Activated CD4-positive, alpha-beta T cell treated with anti-CD3 and anti-CD28 coated beads, Interleukin-2, amount 10 ng/mL, durations not matched to agents 24 days and 14 days (primary cell): ENCODE measurements at regions of chr1 and their contacts with region 1.

Region 1: GRCh38 chr1:53326088-53326597 is 1.7 kb downstream of the LRP8 start:
- DNase-seq: peak; percentile 98
- H3K4me3 Mint-ChIP-seq: peak overlapping the region; percentile 99
- H3K27ac Mint-ChIP-seq: peak overlapping the region; percentile 97
- H3K4me1 Mint-ChIP-seq: peaks cover 40% of the 10 kb centered on the region
- H3K27me3 Mint-ChIP-seq: no peaks in the 10 kb centered on the region

Region 2: GRCh38 chr1:52404116-52404986 is 921.8 kb before region 1 on chr1 and contains the starts of genes ORC1 and PRPF38A:
- intact Hi-C with region 1: loop called (anchors 5 kb)
- DNase-seq: peak; percentile 99
- H3K4me3 Mint-ChIP-seq: peak within 1 kb of the TSS; percentile 99
- H3K27ac Mint-ChIP-seq: peak within 1 kb of the TSS; percentile 100
- H3K4me1 Mint-ChIP-seq: peaks cover 47% of the 10 kb centered on the region
- H3K27me3 Mint-ChIP-seq: no peaks in the 10 kb centered on the region
- total RNA-seq, gene ORC1: 43.5 and 44.2 TPM in 2 replicates
- total RNA-seq, gene PRPF38A: 106 and 108 TPM in 2 replicates

Region 3: DNA sequence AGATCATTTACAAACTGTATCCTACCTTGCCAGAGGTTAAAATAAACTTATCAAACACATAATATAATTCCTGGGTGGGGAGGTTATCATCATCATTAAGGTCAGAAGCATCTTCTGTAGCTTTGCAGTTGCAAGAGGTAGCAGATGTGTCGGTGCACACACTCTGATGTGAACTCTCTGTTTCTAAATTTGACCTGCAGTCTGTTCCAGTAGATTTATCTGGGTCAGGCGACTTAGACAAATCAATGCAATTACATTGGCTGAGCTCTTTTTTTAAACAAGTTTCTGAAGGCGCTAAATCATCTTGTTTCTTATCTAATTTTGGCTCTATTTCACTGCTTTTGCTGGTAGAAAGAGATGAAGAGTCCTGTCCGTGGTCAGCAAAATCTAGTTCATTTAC is 851.3 kb before region 1 on chr1:
- intact Hi-C with region 1: no loop called
- DNase-seq: no peak
- H3K4me3 Mint-ChIP-seq: no peak overlapping the region
- H3K27ac Mint-ChIP-seq: no peak overlapping the region
- H3K4me1 Mint-ChIP-seq: no peaks in the 10 kb centered on the region
- H3K27me3 Mint-ChIP-seq: no peaks in the 10 kb centered on the region

Region 4: DNA sequence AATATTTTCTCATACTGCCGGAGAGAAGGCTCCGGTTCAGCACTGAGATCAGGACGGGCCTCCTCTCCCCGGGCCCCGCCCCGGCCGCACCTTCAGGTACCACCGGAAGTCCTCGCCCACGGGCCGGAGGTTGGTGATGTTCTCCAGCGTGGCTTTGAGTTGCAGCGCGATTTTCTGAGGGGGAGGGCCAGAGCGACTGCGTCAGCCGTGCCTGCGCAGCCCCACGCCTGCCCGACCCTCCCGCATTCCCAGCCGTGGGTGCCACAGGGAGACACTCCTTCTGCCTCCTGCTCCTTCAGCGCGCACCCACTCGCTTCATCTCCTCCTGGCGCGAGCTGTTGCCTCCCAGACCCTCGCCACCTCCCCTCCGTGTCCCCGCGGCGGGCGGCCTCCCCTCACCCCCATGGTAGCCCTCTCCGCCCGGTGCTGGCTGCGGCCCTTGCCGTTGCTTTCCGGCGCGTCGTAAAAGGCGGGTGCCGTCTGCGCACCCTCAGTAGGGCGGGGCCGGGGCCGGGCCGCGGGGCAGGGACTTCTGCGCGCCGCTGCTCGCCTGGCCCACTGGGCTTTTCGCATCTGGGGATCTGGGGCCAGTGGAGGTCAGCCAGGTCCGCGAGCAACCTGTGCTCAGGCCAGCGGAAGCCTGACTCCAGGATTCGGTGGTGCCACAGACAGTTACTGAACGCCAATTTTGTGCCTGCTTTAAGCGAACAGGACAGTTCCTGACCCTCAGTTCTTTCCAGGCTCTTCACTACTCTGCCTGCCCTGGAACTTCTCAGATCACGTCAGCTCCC is 105.8 kb before region 1 on chr1 and contains the start of gene CZIB:
- intact Hi-C with region 1: loop called (anchors 1 kb)
- DNase-seq: peak; percentile 99
- H3K4me3 Mint-ChIP-seq: peak within 1 kb of the TSS; percentile 94
- H3K27ac Mint-ChIP-seq: peak within 1 kb of the TSS; percentile 97
- H3K4me1 Mint-ChIP-seq: peaks cover 23% of the 10 kb centered on the region
- H3K27me3 Mint-ChIP-seq: no peaks in the 10 kb centered on the region
- total RNA-seq, gene CZIB: 44.7 and 44.9 TPM in 2 replicates

Region 5: DNA sequence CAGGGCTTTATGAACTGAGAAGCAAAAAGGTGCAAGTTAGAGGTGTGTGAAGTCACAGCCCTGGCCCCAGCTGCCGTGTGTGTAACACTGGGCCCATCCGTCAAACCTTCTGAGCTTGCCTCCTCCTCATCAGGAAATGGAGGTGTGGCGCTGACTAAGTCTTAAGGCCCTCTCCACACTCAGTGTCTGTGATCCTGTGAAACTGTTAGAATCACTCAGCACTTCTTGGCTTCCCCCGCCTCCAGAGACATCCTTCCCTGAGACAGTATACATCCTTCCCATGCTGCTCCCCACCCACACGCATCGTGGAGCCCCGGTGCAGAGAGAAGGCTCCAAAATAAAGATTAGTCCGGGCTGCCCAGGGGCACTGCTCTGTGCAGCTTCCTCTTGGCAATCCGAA is 31.6 kb before region 1 on chr1:
- intact Hi-C with region 1: loop called (anchors 1 kb)
- DNase-seq: peak; percentile 82
- H3K4me3 Mint-ChIP-seq: peak overlapping the region; percentile 44
- H3K27ac Mint-ChIP-seq: peak overlapping the region; percentile 88
- H3K4me1 Mint-ChIP-seq: peaks cover 41% of the 10 kb centered on the region
- H3K27me3 Mint-ChIP-seq: no peaks in the 10 kb centered on the region

Region 6: DNA sequence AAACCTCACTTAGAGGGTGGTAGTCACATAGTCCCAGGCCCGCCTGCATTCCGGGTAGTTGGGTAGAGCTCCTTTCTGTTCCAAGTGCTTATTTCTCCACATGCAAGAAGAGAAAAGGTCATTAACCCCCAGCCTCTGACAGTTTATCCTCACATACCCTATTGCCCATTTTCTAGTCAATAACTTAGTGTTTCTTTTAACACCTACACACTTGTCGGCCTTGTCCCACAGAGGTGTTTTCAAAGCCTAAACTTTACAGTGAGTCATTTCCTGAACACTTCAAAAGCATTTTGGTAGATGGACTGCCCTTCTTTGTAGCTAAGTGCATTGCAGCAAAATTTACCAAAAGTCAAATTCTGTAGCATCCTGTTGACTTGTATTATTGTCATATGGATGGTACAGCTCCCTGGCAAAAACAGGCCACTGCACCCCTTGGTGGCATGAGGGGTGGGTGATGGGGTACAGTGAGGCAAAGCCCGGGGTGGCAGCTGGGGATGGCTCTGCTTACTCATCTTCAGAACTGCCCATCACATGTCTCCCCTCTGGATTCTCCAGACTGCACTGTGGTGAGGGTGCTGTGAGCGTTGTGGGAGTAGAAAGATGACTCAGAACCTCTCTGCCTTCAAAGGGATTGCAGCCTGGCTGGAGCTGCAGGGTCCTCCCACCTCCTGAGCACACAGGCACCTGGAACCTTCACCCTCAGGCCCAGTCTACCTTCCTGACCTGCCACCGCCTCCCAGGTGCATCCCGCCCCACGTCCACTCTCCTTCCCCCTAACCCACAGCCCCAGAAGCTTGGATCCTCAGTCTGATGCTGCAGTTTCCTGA is 87.2 kb after region 1 on chr1:
- intact Hi-C with region 1: loop called (anchors 1 kb)
- DNase-seq: peak; percentile 91
- H3K4me3 Mint-ChIP-seq: peak overlapping the region; percentile 80
- H3K27ac Mint-ChIP-seq: peak overlapping the region; percentile 96
- H3K4me1 Mint-ChIP-seq: peaks cover 71% of the 10 kb centered on the region
- H3K27me3 Mint-ChIP-seq: no peaks in the 10 kb centered on the region

Region 7: GRCh38 chr1:53585129-53585528 is 259.0 kb after region 1 on chr1:
- intact Hi-C with region 1: no loop called
- DNase-seq: peak; percentile 87
- H3K4me3 Mint-ChIP-seq: no peak overlapping the region
- H3K27ac Mint-ChIP-seq: no peak overlapping the region
- H3K4me1 Mint-ChIP-seq: peaks cover 10% of the 10 kb centered on the region
- H3K27me3 Mint-ChIP-seq: peaks cover 10% of the 10 kb centered on the region